PC-3 (cell line): ENCODE measurements at regions of chr6 and their contacts with region 1.

Region 1: DNA sequence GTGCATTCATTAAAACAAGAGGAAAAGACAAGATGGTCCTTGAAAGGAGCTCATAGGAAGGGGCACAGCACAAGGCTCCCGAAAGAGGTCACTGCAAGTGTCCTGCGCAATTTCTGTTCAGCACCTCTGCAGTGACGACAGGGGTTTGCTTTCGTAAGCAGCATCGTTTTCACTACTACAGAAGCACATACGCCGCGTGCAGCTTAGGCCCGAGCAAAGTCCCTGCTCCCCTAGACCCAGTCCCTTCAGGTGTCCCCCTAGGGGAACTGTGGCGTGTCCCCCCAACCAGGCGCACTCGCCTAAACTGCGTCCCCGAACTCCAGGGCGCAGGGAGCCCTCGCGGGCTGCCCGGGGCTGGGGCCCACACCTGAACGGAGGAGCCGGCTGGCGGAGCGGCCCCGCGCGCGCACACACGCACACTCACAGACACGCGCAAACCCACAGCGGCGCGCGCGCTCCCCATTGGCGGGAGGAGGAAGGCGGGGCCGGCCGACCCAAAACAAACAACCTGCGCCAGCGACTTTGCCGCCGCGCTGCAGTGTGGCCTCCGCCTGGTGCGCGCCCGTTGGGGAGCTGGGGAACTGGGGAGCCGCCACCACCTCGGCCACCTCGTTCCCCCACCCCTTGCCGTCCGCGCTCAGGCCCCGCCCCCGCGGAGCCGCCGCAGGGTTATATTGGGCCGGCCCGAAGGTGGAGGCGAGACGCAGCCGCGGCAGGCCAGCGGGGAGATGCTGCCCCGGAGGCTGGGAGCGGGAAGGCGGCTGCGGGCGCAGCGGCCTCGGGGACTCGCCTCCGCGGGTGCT is at the start of gene FOXQ1:
- DNase-seq: peak; percentile 85
- ATAC-seq: peak; percentile 71
- H3K4me3 ChIP-seq: peak within 1 kb of the TSS; percentile 79
- H3K27ac ChIP-seq: peak within 1 kb of the TSS; percentile 54
- H3K4me1 ChIP-seq: peaks cover 27% of the 10 kb centered on the region
- H3K27me3 ChIP-seq: no peaks in the 10 kb centered on the region
- CTCF ChIP-seq: no peak
- total RNA-seq, gene FOXQ1: 7.5 and 12.4 TPM in 2 replicates

Region 2: GRCh38 chr6:1267057-1267732 is 44.4 kb before region 1 on chr6:
- CTCF ChIA-PET with region 1: no interaction called
- POLR2A ChIA-PET with region 1: no interaction called
- intact Hi-C with region 1: loop called (anchors 5 kb)
- DNase-seq: peak; percentile 86
- ATAC-seq: peak; percentile 92
- H3K4me3 ChIP-seq: no peak overlapping the region
- H3K27ac ChIP-seq: peak overlapping the region; percentile 39
- H3K4me1 ChIP-seq: peaks cover 13% of the 10 kb centered on the region
- H3K27me3 ChIP-seq: no peaks in the 10 kb centered on the region
- CTCF ChIP-seq: no peak